ENCODE measurements at regions of chr4 and their contacts with region 1.

Region 1: DNA sequence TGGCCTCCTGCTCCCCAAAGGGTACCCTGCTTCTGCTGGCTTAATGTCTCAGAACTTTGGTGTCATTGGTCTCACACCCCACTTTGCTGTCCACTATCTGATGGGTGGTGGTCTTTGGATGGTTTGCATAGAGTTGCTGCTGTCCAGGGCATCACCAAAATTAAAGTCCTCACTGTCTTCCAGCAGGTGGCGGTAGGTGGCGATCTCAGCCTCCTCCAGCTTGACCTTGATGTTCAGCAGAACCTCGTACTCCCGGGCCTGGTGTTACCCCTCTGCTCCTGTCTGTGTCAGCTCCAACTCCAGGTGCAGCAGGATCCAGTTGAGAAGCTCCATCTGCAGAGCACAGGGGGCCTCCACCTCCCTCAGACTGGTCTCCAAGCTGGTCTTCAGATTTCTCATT is 1169.5 kb upstream of the PABPC4L start:
- DNase-seq: peak in 1 of 4 experiments; percentile 15
- ATAC-seq: no peak
- H3K4me3 ChIP-seq: no peak overlapping the region
- H3K27ac ChIP-seq: no peak overlapping the region
- H3K4me1 ChIP-seq: no peaks in the 10 kb centered on the region
- H3K27me3 ChIP-seq: no peaks in the 10 kb centered on the region
- CTCF ChIP-seq: peak in 1 of 3 experiments; percentile 8; a peak in 1 of 6 replicates
- EP300 ChIP-seq: no peak
- POLR2A ChIP-seq: no peak
- RAD21 ChIP-seq: no peak

Region 2: GRCh38 chr4:136554033-136554432 is 1182.9 kb after region 1 on chr4:
- CTCF ChIA-PET with region 1: no interaction called
- POLR2A ChIA-PET with region 1: no interaction called
- in situ Hi-C with region 1: no loop called
- intact Hi-C with region 1: no loop called
- DNase-seq: no peak
- ATAC-seq: no peak
- H3K4me3 ChIP-seq: no peak overlapping the region
- H3K27ac ChIP-seq: no peak overlapping the region
- H3K4me1 ChIP-seq: no peaks in the 10 kb centered on the region
- H3K27me3 ChIP-seq: no peaks in the 10 kb centered on the region
- CTCF ChIP-seq: no peak
- EP300 ChIP-seq: no peak
- POLR2A ChIP-seq: no peak
- RAD21 ChIP-seq: no peak

Region 3: DNA sequence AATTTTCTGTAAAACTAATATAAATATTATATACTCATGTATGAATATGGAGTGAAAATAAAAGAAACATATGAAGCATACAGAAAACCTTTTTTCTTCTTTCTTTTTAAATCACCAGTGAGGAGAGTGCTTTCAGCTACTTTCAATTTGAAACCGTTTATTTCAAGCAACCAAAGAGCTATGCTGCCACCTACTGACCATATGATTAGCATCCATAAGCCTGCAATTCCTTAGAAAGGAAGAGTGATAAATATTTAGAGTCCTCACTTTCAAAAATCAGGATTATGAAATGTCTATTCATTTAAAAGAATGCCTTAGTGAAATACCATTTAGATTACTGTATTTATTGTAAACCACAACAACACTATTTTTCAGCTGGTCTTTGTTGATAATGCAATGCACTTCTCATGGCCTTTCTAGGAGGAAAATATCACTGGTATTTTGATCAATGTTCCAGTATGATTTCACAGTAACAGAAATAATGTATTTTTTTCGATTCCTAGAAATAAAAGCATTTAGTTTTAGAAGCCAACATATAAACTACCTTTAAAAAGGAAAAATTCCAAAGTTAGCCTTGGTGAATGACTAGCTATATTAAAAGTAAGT is 1493.5 kb after region 1 on chr4:
- CTCF ChIA-PET with region 1: no interaction called
- POLR2A ChIA-PET with region 1: no interaction called
- in situ Hi-C with region 1: no loop called
- intact Hi-C with region 1: loop called (anchors 1 kb)
- DNase-seq: peak; percentile 3 to 57 (median 16)
- ATAC-seq: peak; percentile 56; the same call in 1 of the 3 replicates
- H3K4me3 ChIP-seq: no peak overlapping the region
- H3K27ac ChIP-seq: no peak overlapping the region
- H3K4me1 ChIP-seq: no peaks in the 10 kb centered on the region
- H3K27me3 ChIP-seq: no peaks in the 10 kb centered on the region
- CTCF ChIP-seq: peak in 2 of 3 experiments; percentile 45 to 69; a peak in 3 of 6 replicates
- EP300 ChIP-seq: no peak
- POLR2A ChIP-seq: no peak
- RAD21 ChIP-seq: peak; percentile 70

Measured in K562 (cell line).